Activated naive CD4-positive, alpha-beta T cell treated with anti-CD3 and anti-CD28 coated beads for 36 hours (primary cell): ENCODE measurements at regions of chr2 and their contacts with region 1.

Region 1: GRCh38 chr2:100562732-100563720 is at the start of gene PDCL3:
- DNase-seq: peak; percentile 94
- H3K4me3 Mint-ChIP-seq: peak within 1 kb of the TSS; percentile 93
- H3K27ac Mint-ChIP-seq: peak within 1 kb of the TSS; percentile 98
- H3K4me1 Mint-ChIP-seq: peaks cover 43% of the 10 kb centered on the region
- H3K27me3 Mint-ChIP-seq: no peaks in the 10 kb centered on the region
- total RNA-seq, gene PDCL3: 42.2 to 42.8 TPM

Region 2: GRCh38 chr2:100334929-100335328 is 228.1 kb before region 1 on chr2:
- CTCF ChIA-PET with region 1: no interaction called
- intact Hi-C with region 1: no loop called
- DNase-seq: no peak
- H3K4me3 Mint-ChIP-seq: no peak overlapping the region
- H3K27ac Mint-ChIP-seq: no peak overlapping the region
- H3K4me1 Mint-ChIP-seq: no peaks in the 10 kb centered on the region
- H3K27me3 Mint-ChIP-seq: peaks cover 17% of the 10 kb centered on the region

Region 3: DNA sequence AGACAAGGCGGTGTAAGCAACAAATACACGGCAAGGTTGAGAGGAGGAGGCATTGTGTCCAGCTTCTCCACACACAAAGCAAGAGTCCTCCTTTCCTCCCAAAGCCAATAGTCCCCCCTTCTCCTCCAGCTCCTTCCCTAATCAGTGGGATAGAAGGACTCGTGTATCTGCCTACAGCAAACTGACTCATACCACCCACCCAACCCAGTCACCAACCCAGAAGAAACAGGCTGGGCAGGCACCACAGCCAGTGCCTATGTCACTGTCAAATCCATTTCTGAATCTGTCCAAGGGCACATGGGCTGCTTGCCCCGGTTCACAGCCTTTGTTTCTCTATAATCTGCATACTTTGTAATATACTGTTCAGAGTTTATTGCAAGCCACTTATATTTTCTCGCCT is 111.9 kb before region 1 on chr2:
- CTCF ChIA-PET with region 1: interaction called, 3 read pairs
- intact Hi-C with region 1: loop called (anchors 2 kb)
- DNase-seq: no peak
- H3K4me3 Mint-ChIP-seq: no peak overlapping the region
- H3K27ac Mint-ChIP-seq: no peak overlapping the region
- H3K4me1 Mint-ChIP-seq: no peaks in the 10 kb centered on the region
- H3K27me3 Mint-ChIP-seq: peaks cover 3% of the 10 kb centered on the region

Region 4: DNA sequence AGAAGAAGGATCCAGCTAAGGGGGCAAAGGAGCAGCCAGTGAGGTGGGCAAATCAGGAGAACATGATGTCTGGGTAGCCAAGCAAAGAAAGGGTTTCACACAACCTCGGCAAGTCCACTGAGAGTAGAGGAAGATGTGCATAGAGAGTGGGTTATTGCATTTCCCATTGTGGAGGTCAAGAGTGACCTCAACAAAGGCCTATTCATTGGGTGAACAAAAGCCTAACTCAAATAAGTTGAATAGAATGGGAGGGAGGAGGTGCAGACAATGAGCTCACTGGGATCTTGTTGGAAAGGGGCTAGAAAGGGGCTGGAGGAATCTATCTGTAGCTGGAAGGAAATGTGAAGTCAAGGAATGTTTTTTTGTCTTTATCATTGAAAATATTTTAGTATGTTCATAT is 14.3 kb before region 1 on chr2:
- CTCF ChIA-PET with region 1: no interaction called
- intact Hi-C with region 1: no loop called
- DNase-seq: no peak
- H3K4me3 Mint-ChIP-seq: no peak overlapping the region
- H3K27ac Mint-ChIP-seq: no peak overlapping the region
- H3K4me1 Mint-ChIP-seq: no peaks in the 10 kb centered on the region
- H3K27me3 Mint-ChIP-seq: no peaks in the 10 kb centered on the region

Region 5: DNA sequence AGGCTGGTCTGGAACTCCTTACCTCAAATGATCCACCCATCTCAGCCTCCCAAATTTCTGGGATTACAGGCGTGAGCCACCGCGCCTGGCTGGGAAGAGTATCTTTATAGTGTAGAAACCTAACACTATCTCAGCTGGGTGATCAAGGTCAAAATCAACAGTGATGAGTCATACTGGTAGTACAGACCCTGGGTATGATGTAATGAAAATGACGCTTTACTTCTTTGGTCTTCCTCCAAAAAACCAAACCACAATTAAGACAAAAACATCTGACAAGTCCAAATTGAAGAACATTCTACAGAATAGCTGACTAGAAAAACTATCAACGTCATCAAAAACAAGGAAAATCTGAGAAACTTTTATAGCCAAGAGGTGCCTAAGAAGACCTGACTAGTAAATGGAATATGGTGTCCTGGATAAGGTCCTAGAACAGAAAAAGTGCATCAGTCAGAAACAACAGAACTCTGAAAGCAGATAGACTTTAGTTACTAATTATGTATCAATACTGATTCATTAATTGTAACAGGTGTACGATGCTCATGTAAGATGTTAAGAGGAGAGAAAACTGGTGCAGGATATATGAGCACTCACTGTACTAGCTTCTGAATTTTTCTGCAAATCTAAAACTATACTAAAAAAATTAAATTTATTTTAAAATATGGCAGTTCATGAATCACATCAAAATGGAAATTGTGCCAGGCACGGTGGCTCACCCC is 25.2 kb after region 1 on chr2:
- CTCF ChIA-PET with region 1: no interaction called
- intact Hi-C with region 1: loop called (anchors 2 kb)
- DNase-seq: peak; percentile 34
- H3K4me3 Mint-ChIP-seq: peak overlapping the region; percentile 17
- H3K27ac Mint-ChIP-seq: peak overlapping the region; percentile 54
- H3K4me1 Mint-ChIP-seq: peaks cover 31% of the 10 kb centered on the region
- H3K27me3 Mint-ChIP-seq: no peaks in the 10 kb centered on the region

Region 6: DNA sequence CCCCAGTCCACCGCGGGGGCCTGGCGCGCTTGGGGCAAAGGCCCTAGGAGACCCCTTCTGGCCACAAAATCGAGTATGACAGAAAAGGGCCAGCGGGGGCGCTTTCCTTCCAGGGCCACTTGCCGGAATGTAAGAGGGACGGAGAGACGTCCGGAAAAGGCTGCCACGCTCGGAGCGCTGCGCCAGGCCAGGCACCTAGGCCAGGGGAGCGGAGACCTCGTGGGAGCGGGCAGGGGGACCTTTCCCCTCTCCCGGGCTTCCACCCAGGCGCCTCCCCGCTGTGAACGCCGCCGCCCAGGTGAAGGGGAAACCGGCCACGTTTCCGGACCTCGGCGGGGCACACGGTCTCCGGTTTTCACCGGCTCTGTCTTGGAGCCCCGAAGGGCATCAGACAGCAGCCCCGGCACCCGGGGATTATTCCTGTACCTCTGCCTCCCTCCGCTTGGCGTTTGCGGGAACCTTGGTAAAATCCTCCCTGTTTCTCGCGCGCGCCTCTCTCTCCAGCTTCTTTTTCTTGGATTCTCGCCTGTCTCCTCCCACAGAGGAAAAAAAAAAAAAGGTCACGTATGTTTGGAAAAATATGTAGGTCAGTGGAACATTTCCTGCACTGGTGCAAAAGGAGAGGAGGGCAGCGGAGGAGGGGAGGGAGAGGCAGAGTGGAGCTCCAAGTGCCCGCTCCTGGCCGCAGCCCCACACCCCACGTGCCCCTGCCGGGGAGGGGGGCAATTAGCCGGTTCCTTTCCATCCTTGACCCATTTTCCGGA is 255.8 kb after region 1 on chr2:
- CTCF ChIA-PET with region 1: no interaction called
- intact Hi-C with region 1: loop called (anchors 5 kb)
- DNase-seq: peak; percentile 39
- H3K4me3 Mint-ChIP-seq: peak overlapping the region; percentile 70
- H3K27ac Mint-ChIP-seq: no peak overlapping the region
- H3K4me1 Mint-ChIP-seq: peaks cover 26% of the 10 kb centered on the region
- H3K27me3 Mint-ChIP-seq: peaks cover 15% of the 10 kb centered on the region

Region 7: GRCh38 chr2:100893392-100894089 is 330.5 kb after region 1 on chr2:
- CTCF ChIA-PET with region 1: no interaction called
- intact Hi-C with region 1: no loop called
- DNase-seq: no peak
- H3K4me3 Mint-ChIP-seq: no peak overlapping the region
- H3K27ac Mint-ChIP-seq: no peak overlapping the region
- H3K4me1 Mint-ChIP-seq: peaks cover 2% of the 10 kb centered on the region
- H3K27me3 Mint-ChIP-seq: no peaks in the 10 kb centered on the region

Region 8: GRCh38 chr2:101151141-101151858 is 588.3 kb after region 1 on chr2 and contains the start of gene TBC1D8:
- CTCF ChIA-PET with region 1: no interaction called
- intact Hi-C with region 1: loop called (anchors 2 kb)
- DNase-seq: peak; percentile 66
- H3K4me3 Mint-ChIP-seq: peak within 1 kb of the TSS; percentile 77
- H3K27ac Mint-ChIP-seq: no peak within 1 kb of the TSS
- H3K4me1 Mint-ChIP-seq: peaks cover 17% of the 10 kb centered on the region
- H3K27me3 Mint-ChIP-seq: peaks cover 19% of the 10 kb centered on the region
- total RNA-seq, gene TBC1D8: 4.0 to 4.5 TPM